Sigmoid colon (tissue), 7 donors: ENCODE measurements at regions of chr6 and their contacts with region 1.

Region 1: DNA sequence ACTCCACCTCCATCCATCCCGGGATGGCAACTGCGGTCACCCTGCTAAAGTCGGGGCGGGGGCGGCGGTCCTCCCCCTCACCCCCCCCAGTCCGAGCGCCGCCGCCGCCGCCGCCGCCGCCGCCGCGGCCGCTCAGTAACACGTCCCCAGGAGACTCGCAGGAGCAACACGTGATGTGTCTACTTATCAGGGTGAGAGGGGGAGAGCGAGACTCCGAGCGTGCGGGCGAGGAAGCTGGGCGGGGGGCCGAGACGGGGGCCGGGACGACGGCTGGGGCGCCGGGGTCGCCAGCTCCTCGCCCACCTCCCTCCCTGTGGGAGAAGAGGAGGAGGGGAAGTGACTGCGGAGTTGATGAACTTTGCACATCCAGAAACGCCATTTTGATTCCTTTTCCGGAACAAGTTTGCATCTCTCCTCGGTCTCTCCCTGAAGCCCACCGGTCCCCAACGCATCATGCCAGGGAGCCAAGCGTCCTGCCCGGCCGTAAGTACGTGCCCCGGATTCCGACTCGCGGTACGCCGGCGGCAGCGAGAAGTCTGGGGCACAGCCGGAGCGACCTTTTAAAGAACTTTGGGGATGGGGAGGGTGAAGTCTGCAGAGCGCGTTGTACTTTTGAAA is at the start of gene RREB1:
- DNase-seq: peak; percentile 85
- H3K4me3 ChIP-seq: peak within 1 kb of the TSS; percentile 80 to 96 (median 88)
- H3K27ac ChIP-seq: peak within 1 kb of the TSS; percentile 95 to 98 (median 96)
- H3K4me1 ChIP-seq: peaks cover 0 to 43% (median 25%) of the 10 kb centered on the region in 4 donors
- H3K27me3 ChIP-seq: no peaks in the 10 kb centered on the region
- CTCF ChIP-seq: no peak
- EP300 ChIP-seq: no peak
- POLR2A ChIP-seq: peak in 1 of 2 donors; percentile 20
- total RNA-seq, gene RREB1: 18.9 to 31.9 (median 23.2) TPM

Region 2: DNA sequence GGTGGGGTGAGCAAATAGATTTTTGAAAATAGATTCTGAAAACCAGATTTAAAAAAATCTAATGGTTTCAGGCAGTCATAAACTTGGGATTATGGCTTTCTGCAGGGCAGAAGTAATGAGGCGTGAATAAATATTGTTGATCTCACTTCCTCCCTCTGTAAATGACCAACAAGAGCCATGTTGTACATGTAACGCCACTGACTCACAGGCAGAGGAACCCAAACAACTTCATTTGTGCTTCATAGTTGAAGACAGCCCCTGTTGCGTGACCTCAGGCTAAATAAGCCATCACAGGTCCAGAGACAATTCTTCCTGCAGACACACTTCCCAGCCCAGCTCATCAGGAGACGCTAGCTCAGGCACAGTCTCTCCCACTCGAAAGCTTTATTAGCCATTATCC is 728.1 kb before region 1 on chr6:
- intact Hi-C with region 1: no loop called
- DNase-seq: no peak
- H3K4me3 ChIP-seq: no peak overlapping the region
- H3K27ac ChIP-seq: no peak overlapping the region
- H3K4me1 ChIP-seq: no peaks in the 10 kb centered on the region
- H3K27me3 ChIP-seq: no peaks in the 10 kb centered on the region
- CTCF ChIP-seq: no peak
- EP300 ChIP-seq: no peak
- POLR2A ChIP-seq: no peak

Region 3: DNA sequence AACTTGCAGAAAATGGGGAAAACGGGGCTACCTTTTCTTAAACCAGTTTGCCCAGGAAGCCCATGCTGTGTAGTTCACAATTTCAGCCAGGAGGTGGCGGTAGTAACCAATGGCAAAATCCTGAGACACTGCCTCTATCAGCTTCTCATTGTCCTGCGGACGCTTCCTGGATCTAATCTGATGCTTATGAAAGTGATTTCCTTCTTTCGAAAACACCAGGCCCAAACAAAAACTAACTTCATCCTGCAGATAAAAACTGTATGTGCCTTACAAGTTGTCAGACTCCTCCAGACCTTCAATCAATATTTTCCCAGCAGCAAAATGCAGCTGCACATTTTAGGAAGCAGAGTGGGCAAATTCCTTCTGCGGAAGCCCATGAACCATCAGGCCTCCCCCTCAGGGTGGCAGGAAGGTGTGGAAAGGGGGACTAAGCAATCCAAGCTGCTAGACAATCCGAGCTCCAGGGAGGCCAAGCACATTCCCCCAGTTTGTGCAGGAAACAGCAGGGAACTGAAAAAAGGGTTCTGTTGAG is 430.7 kb before region 1 on chr6:
- intact Hi-C with region 1: loop called (anchors 5 kb)
- DNase-seq: peak; percentile 85
- H3K4me3 ChIP-seq: no peak overlapping the region
- H3K27ac ChIP-seq: peak overlapping the region in 1 of 4 donors; percentile 15
- H3K4me1 ChIP-seq: peaks cover 0 to 5% (median 2%) of the 10 kb centered on the region in 4 donors
- H3K27me3 ChIP-seq: no peaks in the 10 kb centered on the region
- CTCF ChIP-seq: peak; percentile 83 to 94 (median 93)
- EP300 ChIP-seq: no peak
- POLR2A ChIP-seq: no peak

Region 4: DNA sequence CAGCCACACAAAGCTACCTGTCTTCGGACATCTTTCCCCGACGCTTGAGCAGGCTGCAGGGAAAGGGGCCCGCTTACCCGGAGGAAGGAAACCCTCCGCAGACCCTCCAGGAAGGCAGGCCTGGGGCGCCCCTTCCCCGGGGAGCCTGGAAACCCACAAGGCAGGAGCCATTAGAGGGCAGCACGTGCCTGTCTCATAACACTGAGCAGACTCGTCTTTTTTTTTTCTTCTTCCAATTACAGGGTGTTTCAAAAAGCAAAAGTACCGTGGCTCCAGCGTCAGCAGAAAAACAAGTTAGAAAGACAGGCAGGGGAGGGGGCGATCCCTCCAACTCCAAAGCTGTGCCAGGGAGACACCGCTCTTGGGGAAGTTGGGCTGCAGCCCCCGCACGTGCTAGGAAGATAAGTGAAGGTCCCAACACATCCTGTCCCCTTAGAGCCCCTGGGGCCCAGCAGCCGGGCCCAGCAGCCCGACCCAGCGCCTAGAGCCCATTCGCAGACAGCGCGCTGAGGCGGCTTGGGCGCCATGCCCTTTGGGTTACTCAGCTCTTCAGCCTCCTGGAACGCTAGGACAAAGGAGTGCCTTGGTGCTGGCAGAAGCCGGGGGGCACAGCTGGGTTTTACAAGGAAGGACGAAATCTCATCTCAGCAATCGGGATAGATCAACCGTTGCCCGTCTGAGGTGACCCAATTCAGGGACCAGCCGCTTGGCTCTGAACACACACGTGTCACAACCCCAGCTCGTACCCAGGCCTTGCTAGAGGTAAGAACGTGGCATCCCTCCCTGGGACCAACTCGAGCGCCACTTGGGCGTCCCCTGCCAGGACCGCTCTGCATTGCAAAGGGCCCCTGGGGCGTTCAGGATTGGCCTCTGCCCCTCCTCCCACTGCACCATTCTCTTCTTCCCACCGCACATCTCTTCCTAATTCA is 382.9 kb before region 1 on chr6:
- intact Hi-C with region 1: loop called (anchors 2 kb)
- DNase-seq: peak; percentile 82
- H3K4me3 ChIP-seq: peak overlapping the region; percentile 16 to 53 (median 45)
- H3K27ac ChIP-seq: peak overlapping the region; percentile 70 to 77 (median 76)
- H3K4me1 ChIP-seq: peaks cover 0 to 18% (median 16%) of the 10 kb centered on the region in 4 donors
- H3K27me3 ChIP-seq: no peaks in the 10 kb centered on the region
- CTCF ChIP-seq: peak; percentile 51 to 75 (median 64)
- EP300 ChIP-seq: no peak
- POLR2A ChIP-seq: no peak

Region 5: DNA sequence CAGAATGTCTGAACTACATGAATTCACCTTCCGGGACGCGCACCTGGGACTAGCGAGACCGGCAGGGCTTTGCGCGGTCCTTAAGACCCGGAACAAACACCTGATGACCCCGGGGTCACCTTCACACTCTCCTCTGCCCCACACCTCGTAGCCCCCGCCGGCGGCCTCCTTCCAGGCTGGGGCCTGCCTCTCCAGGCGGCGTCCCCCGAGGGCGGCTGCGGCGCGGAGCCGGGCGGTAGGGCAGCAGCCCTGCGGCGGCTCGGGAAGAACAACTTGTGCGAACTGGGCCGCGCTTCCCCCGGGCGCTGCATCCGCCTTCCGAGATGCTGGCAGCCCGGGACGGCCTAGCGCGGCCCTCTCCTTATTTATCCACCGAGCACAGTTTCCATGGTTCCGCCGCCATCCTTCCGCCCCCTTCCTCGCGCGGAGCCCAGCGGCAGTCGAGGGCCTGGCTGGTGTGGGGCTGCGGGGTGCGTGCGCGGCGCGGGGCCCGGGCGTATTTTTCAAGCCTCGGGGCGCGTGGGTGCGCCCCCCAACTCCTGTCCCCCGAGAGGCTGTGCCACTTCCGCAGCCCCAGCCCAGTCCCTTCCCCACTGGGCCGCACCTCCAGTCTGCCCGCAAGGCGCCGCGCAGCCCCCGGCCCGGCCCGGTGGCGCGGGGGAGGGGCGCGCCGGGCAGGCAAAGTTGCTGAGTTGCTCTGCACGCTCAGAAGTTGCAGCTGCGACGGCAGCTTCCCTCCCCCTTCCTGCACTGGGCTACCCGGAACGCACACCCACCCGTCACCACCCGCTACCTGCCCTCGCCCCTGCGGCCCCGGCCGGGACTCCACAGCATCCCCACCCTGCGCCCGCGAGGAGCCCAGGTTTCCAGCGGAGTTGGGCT is 56.2 kb before region 1 on chr6:
- intact Hi-C with region 1: loop called (anchors 2 kb)
- DNase-seq: peak; percentile 77
- H3K4me3 ChIP-seq: peak overlapping the region; percentile 46 to 79 (median 58)
- H3K27ac ChIP-seq: peak overlapping the region; percentile 65 to 82 (median 76)
- H3K4me1 ChIP-seq: peaks cover 0 to 20% (median 12%) of the 10 kb centered on the region in 4 donors
- H3K27me3 ChIP-seq: no peaks in the 10 kb centered on the region
- CTCF ChIP-seq: no peak
- EP300 ChIP-seq: no peak
- POLR2A ChIP-seq: no peak

Region 6: GRCh38 chr6:7145885-7146828 is 38.5 kb after region 1 on chr6:
- intact Hi-C with region 1: loop called (anchors 2 kb)
- DNase-seq: peak; percentile 85
- H3K4me3 ChIP-seq: peak overlapping the region in 2 of 4 donors; percentile 1 to 7
- H3K27ac ChIP-seq: peak overlapping the region; percentile 82 to 96 (median 94)
- H3K4me1 ChIP-seq: peaks cover 0 to 87% (median 76%) of the 10 kb centered on the region in 4 donors
- H3K27me3 ChIP-seq: no peaks in the 10 kb centered on the region
- CTCF ChIP-seq: no peak
- EP300 ChIP-seq: no peak
- POLR2A ChIP-seq: no peak

Region 7: DNA sequence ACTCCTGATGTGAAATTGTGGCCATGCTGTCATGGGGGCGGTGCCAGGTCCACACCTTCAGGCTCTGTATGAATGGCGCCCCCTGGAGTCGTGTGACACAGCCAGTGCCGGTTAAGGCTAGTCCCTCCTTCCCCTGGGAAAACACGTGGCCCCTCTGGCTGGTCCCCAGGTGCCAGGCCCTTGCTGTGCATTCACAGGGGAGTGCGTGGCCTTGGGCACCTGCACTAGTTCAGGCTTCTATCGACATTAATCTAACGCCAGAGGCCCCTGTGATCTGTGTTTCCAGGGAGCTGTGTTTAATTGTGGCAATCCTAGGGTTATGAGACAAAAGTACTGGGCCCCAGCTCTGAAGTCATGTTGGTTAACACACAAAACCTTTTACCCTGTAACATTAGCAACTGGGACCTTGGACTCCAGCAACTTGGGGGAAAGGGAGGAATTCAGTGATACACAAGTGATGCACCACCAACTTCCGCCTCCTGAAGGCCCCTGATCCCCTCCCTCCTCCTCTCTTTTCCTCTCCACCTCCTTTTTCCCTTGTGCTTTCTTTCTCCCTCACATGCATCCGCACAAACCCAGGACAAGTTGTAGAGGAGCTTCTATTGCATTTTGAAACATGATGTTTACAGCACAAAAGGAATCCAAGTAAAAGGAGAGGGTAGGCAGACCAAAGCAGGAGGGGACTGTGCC is 131.4 kb after region 1 on chr6:
- intact Hi-C with region 1: loop called (anchors 5 kb)
- DNase-seq: peak; percentile 91
- H3K4me3 ChIP-seq: no peak overlapping the region
- H3K27ac ChIP-seq: peak overlapping the region in 2 of 4 donors; percentile 18 to 24
- H3K4me1 ChIP-seq: peaks cover 0 to 26% (median 6%) of the 10 kb centered on the region in 4 donors
- H3K27me3 ChIP-seq: no peaks in the 10 kb centered on the region
- CTCF ChIP-seq: peak; percentile 32 to 66 (median 57)
- EP300 ChIP-seq: no peak
- POLR2A ChIP-seq: no peak

Region 8: GRCh38 chr6:7267466-7268091 is 159.9 kb after region 1 on chr6:
- intact Hi-C with region 1: no loop called
- DNase-seq: peak; percentile 73
- H3K4me3 ChIP-seq: no peak overlapping the region
- H3K27ac ChIP-seq: no peak overlapping the region
- H3K4me1 ChIP-seq: peaks cover 0 to 9% (median 3%) of the 10 kb centered on the region in 4 donors
- H3K27me3 ChIP-seq: no peaks in the 10 kb centered on the region
- CTCF ChIP-seq: no peak
- EP300 ChIP-seq: no peak
- POLR2A ChIP-seq: no peak